CD8-positive, alpha-beta memory T cell (primary cell): ENCODE measurements at regions of chr7 and their contacts with region 1.

Region 1: GRCh38 chr7:138608275-138608674 is 92.9 kb downstream of the SVOPL start:
- DNase-seq: no peak
- H3K4me3 ChIP-seq: no peak overlapping the region
- H3K4me3 Mint-ChIP-seq: peak overlapping the region in 3 of 7 donors; percentile 1 to 76 (median 10)
- H3K27ac ChIP-seq: no peak overlapping the region
- H3K27ac Mint-ChIP-seq: peak overlapping the region in 2 of 8 donors; percentile 7 to 74
- H3K4me1 ChIP-seq: no peaks in the 10 kb centered on the region
- H3K4me1 Mint-ChIP-seq: peaks cover 9 to 21% (median 17%) of the 10 kb centered on the region in 3 donors
- H3K27me3 ChIP-seq: no peaks in the 10 kb centered on the region
- H3K27me3 Mint-ChIP-seq: peaks cover 0 to 2% of the 10 kb centered on the region in 2 donors

Region 2: GRCh38 chr7:138770904-138771303 is 162.6 kb after region 1 on chr7:
- CTCF ChIA-PET with region 1: no interaction called
- POLR2A ChIA-PET with region 1: interaction called, 11 read pairs
- DNase-seq: no peak
- H3K4me3 ChIP-seq: no peak overlapping the region
- H3K4me3 Mint-ChIP-seq: no peak overlapping the region
- H3K27ac ChIP-seq: no peak overlapping the region
- H3K27ac Mint-ChIP-seq: peak overlapping the region in 2 of 8 donors; percentile 56 to 69
- H3K4me1 ChIP-seq: no peaks in the 10 kb centered on the region
- H3K4me1 Mint-ChIP-seq: peaks cover 0 to 5% (median 0%) of the 10 kb centered on the region in 3 donors
- H3K27me3 ChIP-seq: no peaks in the 10 kb centered on the region
- H3K27me3 Mint-ChIP-seq: peaks cover 2 to 5% of the 10 kb centered on the region in 2 donors

Region 3: DNA sequence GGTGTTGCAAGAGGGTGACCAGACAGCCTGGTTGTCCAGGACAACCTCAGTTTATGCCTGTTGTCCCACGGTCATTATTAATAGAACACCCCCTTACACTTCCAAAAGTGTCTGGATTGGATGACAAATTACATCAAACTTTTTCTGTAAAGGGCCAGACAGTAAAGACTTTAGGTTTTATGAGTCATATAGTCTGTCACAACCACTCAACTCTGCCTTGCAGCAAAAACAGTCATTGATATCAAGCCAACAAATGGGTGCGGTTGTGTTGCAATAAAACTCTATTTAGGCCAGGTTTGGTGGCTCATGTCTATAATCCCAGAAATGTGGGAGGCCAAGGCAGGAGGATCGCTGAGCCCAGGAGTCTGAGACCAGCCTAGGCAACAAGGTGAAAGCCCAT is 256.4 kb after region 1 on chr7:
- CTCF ChIA-PET with region 1: no interaction called
- POLR2A ChIA-PET with region 1: no interaction called
- DNase-seq: no peak
- H3K4me3 ChIP-seq: no peak overlapping the region
- H3K4me3 Mint-ChIP-seq: no peak overlapping the region
- H3K27ac ChIP-seq: no peak overlapping the region
- H3K27ac Mint-ChIP-seq: no peak overlapping the region
- H3K4me1 ChIP-seq: no peaks in the 10 kb centered on the region
- H3K4me1 Mint-ChIP-seq: peaks cover 0 to 16% (median 0%) of the 10 kb centered on the region in 3 donors
- H3K27me3 ChIP-seq: no peaks in the 10 kb centered on the region
- H3K27me3 Mint-ChIP-seq: peaks cover 6 to 13% of the 10 kb centered on the region in 2 donors